ENCODE measurements at regions of chr9 and their contacts with region 1.

Region 1: GRCh38 chr9:12684923-12685468 is 8.2 kb upstream of the TYRP1 start:
- DNase-seq: no peak
- H3K4me3 ChIP-seq: no peak overlapping the region
- H3K27ac ChIP-seq: no peak overlapping the region
- H3K4me1 ChIP-seq: no peaks in the 10 kb centered on the region; the same call in 1 of the 2 replicates
- H3K27me3 ChIP-seq: no peaks in the 10 kb centered on the region
- CTCF ChIP-seq: no peak

Region 2: DNA sequence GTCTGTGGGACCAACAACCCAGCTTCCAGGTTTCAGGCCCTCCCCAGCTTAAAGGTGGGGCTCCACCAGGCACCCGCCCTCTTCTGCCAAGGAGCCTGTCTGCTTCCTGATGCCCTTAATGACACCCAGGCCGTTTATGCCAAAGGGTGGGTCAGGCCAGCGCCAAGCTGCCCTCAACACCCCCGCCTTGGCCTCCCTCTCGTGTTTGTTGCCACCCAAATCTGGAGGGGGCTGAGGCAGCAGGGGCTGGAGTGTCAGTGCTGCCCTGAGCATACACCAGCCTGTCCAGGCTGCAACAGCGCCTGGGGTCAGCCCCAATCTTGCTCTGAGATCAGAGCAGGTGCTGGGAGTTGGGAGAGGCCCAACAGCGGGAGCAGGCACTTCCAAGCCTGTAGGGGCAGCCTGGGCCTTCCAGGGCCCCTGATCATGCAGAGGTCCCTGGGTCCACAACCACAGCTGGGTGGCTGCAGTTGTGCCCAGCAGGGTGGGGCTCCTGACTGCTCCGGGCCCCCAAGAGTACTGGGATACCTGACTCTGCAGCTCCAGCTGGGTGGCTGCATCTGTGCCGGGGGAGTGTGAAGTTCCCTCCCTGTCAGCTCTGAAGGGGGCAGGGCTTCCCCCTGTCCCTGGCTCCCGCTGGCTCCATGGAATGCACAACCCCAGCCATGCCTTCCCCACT is 26.3 kb before region 1 on chr9:
- CTCF ChIA-PET with region 1: no interaction called
- POLR2A ChIA-PET with region 1: no interaction called
- intact Hi-C with region 1: loop called (anchors 2 kb)
- DNase-seq: no peak
- H3K4me3 ChIP-seq: no peak overlapping the region
- H3K27ac ChIP-seq: no peak overlapping the region
- H3K4me1 ChIP-seq: no peaks in the 10 kb centered on the region
- H3K27me3 ChIP-seq: no peaks in the 10 kb centered on the region
- CTCF ChIP-seq: no peak

Measured in PC-9 (cell line).